Activated CD4-positive, alpha-beta T cell treated with anti-CD3 and anti-CD28 coated beads, Interleukin-2, amount 10 ng/mL, durations not matched to agents 24 days and 14 days (primary cell): ENCODE measurements at regions of chr1 and their contacts with region 1.

Region 1: DNA sequence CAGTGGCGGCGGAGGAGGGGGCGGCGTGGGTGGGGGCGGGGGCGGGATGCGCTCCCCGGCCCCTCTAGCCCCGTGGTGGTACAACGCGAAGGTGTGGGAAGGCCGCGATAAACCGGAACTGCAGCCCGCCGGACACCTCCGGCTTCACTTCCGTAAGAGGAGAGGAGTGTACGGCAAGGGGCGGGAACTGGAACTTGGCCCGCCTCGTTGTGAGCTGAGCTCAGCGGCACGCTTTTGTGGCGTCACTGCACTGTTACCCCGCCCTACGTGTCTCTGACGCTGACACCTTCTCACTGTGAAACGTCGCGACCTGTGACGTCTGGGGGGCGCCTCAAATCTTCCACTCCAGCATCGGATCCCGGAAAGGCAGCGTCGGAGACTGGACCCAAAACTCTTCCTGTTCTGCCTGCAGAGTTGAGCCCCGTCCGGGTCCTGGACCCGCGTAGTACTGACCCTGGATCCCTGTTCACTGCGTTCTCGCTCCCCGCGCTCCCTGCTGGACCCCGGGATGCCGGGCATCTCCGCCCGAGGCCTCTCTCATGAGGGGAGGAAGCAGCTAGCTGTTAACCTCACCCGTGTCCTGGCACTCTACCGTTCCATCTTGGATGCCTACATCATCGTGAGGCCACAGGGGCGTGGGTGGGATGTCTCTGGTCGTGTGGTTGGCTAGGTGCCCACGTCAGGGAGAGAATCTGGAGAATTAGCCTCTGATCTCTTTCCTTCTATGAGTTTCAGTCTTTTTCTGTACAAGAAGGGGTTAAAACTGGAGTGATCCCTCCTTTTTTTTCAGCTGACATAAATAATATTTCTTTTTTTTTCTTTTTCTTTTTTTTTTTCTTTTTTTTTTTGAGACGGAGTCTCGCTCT is at the start of gene ISG20L2:
- DNase-seq: peak; percentile 99
- H3K4me3 Mint-ChIP-seq: no peak within 1 kb of the TSS
- H3K27ac Mint-ChIP-seq: no peak within 1 kb of the TSS
- H3K4me1 Mint-ChIP-seq: peaks cover 28% of the 10 kb centered on the region
- H3K27me3 Mint-ChIP-seq: no peaks in the 10 kb centered on the region
- total RNA-seq, gene ISG20L2: 75.4 and 83.1 TPM in 2 replicates

Region 2: DNA sequence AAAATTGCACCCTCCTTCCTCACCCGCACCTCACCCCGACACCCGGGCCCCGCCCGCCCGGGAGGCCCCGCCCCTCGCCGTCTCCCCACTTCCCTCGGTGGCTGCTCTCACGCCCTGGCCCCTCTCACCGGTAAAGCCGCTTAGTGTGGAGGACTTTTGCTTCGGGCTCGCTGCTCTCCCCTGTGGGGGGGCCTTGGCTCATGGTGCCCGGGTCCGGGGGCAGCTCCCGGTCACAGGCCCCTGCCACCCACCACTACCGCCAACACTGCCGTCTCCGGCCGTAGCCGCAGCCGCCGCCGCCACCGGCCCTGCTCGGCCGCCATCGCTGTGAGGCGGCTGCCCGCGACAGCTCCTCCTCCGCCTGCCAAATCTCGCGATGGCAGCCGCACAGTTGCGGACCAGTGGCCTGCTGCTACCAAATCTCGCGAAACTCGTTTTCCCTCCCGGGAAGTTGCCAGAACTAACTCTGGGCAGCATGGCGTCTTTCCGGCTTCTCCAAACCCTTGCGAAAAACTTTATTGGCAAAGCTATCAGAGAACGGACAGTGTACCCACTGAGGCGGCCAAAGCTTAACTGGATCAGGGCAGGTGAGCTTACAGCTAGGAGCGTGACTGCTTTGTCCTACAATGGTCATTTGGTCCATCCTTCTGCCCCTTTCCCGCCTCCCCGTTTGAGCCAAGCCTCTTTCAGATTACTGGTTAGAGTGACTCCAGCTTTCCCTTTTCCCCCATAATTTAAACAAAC is 446.2 kb before region 1 on chr1 and contains the start of gene SMG5:
- intact Hi-C with region 1: loop called (anchors 2 kb)
- DNase-seq: peak; percentile 99
- H3K4me3 Mint-ChIP-seq: peak within 1 kb of the TSS; percentile 93
- H3K27ac Mint-ChIP-seq: peak within 1 kb of the TSS; percentile 96
- H3K4me1 Mint-ChIP-seq: peaks cover 38% of the 10 kb centered on the region
- H3K27me3 Mint-ChIP-seq: no peaks in the 10 kb centered on the region
- total RNA-seq, gene SMG5: 93.8 and 95.8 TPM in 2 replicates

Region 3: GRCh38 chr1:156659994-156660751 is 68.7 kb before region 1 on chr1:
- intact Hi-C with region 1: loop called (anchors 2 kb)
- DNase-seq: peak; percentile 98
- H3K4me3 Mint-ChIP-seq: peak overlapping the region; percentile 93
- H3K27ac Mint-ChIP-seq: peak overlapping the region; percentile 93
- H3K4me1 Mint-ChIP-seq: peaks cover 58% of the 10 kb centered on the region
- H3K27me3 Mint-ChIP-seq: peaks cover 29% of the 10 kb centered on the region

Region 4: GRCh38 chr1:156705918-156706656 is 22.7 kb before region 1 on chr1:
- intact Hi-C with region 1: loop called (anchors 1 kb)
- DNase-seq: peak; percentile 90
- H3K4me3 Mint-ChIP-seq: peak overlapping the region; percentile 89
- H3K27ac Mint-ChIP-seq: peak overlapping the region; percentile 72
- H3K4me1 Mint-ChIP-seq: peaks cover 20% of the 10 kb centered on the region
- H3K27me3 Mint-ChIP-seq: peaks cover 42% of the 10 kb centered on the region

Region 5: DNA sequence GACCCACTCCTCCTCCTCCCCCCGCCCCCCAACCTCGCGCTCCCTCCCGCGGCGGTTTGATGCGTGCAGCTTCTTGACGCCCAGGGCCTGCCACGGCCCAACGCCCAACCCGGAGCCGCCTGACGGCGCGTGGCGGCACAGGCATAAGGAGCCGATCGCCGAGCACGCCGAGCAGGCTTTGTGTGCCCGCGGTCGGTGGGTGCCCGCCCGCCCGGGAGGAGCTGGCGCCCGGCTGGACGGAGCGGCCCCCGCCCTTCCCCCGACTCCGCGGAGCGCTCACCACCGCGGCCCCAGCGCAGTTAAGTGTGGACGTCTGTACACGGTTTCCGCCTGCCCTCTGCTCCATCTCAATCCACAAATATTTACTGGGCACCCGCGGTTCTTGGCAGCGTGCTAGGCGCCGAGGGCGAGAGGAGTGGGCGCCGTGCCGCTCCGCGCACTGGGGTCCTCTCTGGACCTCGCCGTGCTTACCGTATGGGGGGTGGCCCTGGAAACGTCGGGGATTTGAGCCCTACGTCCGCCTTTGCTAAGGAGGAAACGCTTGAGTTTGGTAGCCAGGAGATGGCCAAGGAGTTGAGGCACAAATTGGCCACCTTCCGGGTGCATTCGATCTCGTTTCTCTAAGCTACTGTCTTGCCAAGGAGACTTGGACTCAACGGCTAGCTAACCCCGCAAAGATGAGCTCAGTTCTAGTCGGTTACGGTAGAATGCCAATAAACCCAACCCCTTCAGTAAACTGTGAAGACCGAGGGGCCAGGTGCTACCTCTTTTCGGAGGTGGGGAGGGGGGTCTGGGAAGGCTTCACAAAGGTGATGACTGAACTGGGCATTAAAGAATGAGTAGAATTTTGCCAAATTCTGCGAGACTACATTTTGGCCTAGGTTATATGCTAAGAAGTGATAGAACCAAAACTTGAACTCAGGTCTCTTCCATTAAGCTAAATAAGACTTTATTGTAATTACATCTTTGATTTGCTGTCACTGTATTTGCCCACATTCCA is 23.2 kb after region 1 on chr1:
- intact Hi-C with region 1: loop called (anchors 1 kb)
- DNase-seq: peak; percentile 98
- H3K4me3 Mint-ChIP-seq: peak overlapping the region; percentile 97
- H3K27ac Mint-ChIP-seq: peak overlapping the region; percentile 96
- H3K4me1 Mint-ChIP-seq: peaks cover 33% of the 10 kb centered on the region
- H3K27me3 Mint-ChIP-seq: no peaks in the 10 kb centered on the region

Region 6: GRCh38 chr1:156813750-156814570 is 85.1 kb after region 1 on chr1:
- intact Hi-C with region 1: loop called (anchors 2 kb)
- DNase-seq: peak; percentile 92
- H3K4me3 Mint-ChIP-seq: peak overlapping the region; percentile 96
- H3K27ac Mint-ChIP-seq: peak overlapping the region; percentile 100
- H3K4me1 Mint-ChIP-seq: peaks cover 65% of the 10 kb centered on the region
- H3K27me3 Mint-ChIP-seq: no peaks in the 10 kb centered on the region